Activated CD8-positive, alpha-beta memory T cell treated with anti-CD3 and anti-CD28 coated beads, Interleukin-2, amount 10 ng/mL, durations not matched to agents 7 days and 5 days (primary cell): ENCODE measurements at regions of chr19 and their contacts with region 1.

Region 1: DNA sequence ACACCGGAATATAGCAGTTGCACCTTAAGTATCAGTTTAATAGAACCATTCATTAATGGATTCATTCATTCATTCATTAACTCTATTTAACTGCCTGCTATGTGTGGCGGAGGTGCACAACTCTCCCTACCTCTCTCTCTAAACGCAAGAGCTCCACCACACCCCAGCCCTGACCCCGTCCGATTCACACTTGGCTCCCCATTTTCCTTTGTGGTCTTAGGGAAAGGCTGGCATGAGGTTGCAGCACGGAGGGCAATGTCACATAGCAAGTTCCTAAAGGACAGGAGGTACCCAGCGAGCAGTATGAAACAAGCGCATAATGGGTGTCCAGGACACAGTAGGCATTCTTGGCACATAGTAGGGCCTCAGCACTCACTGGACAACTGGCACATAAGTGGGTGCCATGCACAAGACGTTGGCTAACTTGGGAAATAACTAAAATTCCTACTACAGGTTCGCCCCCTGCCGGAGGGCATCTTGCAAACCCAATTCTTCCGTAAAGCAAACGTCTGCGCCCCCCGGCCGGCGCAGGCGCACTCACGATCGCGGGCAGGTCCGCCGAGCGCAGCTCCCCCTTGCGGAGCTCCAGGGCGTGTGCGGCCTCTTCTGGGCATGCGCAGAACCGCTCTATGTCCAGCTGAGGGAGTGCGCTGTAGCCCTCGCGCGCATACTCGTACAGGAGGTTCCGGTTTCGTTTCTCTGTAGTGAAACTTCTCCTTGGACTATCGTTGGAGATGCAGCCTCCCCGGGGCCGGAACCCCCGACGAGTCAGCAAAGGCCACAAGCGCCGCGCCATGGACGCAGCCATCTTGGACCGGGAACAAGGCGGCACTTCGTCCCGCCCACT is at the start of gene SARS2:
- DNase-seq: peak; percentile 95
- ATAC-seq: peak; percentile 69
- H3K4me3 Mint-ChIP-seq: peak within 1 kb of the TSS; percentile 86
- H3K27ac Mint-ChIP-seq: peak within 1 kb of the TSS; percentile 99
- H3K4me1 Mint-ChIP-seq: peaks cover 53% of the 10 kb centered on the region
- H3K27me3 Mint-ChIP-seq: no peaks in the 10 kb centered on the region
- total RNA-seq, gene SARS2: 45.7 to 46.4 TPM

Region 2: GRCh38 chr19:38647368-38647965 is 282.7 kb before region 1 on chr19 and contains the start of gene ACTN4:
- CTCF ChIA-PET with region 1: interaction called, 14 read pairs
- DNase-seq: peak; percentile 99
- ATAC-seq: peak; percentile 93
- H3K4me3 Mint-ChIP-seq: peak within 1 kb of the TSS; percentile 93
- H3K27ac Mint-ChIP-seq: peak within 1 kb of the TSS; percentile 78
- H3K4me1 Mint-ChIP-seq: peaks cover 47% of the 10 kb centered on the region
- H3K27me3 Mint-ChIP-seq: no peaks in the 10 kb centered on the region
- total RNA-seq, gene ACTN4: 413 to 433 TPM

Region 3: GRCh38 chr19:38831142-38831605 is 99.0 kb before region 1 on chr19:
- CTCF ChIA-PET with region 1: interaction called, 28 read pairs
- DNase-seq: peak; percentile 75
- ATAC-seq: peak; percentile 41
- H3K4me3 Mint-ChIP-seq: peak overlapping the region; percentile 93
- H3K27ac Mint-ChIP-seq: peak overlapping the region; percentile 95
- H3K4me1 Mint-ChIP-seq: peaks cover 22% of the 10 kb centered on the region
- H3K27me3 Mint-ChIP-seq: no peaks in the 10 kb centered on the region

Region 4: GRCh38 chr19:38891771-38892170 is 38.4 kb before region 1 on chr19:
- CTCF ChIA-PET with region 1: interaction called, 30 read pairs
- DNase-seq: no peak
- ATAC-seq: no peak
- H3K4me3 Mint-ChIP-seq: no peak overlapping the region
- H3K27ac Mint-ChIP-seq: no peak overlapping the region
- H3K4me1 Mint-ChIP-seq: no peaks in the 10 kb centered on the region
- H3K27me3 Mint-ChIP-seq: no peaks in the 10 kb centered on the region